ENCODE measurements at regions of chr4 and their contacts with region 1.

Region 1: DNA sequence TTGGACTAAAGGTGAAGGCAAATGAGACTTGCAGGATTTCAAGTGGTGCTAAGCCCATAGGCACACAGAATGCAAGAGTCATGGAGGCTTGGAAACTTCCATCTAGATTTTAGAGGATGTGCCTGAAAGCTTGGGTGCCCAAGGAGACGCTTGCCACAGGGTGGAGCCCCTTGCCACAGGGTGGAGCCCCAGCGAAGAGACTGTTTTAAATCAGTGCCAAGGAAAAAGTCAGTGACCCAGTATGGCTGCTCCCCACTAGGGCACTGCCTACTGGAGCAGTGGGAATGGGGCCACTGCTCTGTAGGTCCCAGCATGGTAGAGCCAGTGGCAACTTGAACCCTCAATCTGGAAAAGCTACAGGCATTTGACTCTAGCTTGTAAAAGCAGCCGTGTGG is 794.2 kb upstream of the LCORL start:
- DNase-seq: peak in 1 of 2 experiments; percentile 5
- H3K4me3 ChIP-seq: no peak overlapping the region
- H3K4me3 Mint-ChIP-seq: no peak overlapping the region
- H3K27ac Mint-ChIP-seq: no peak overlapping the region
- H3K4me1 ChIP-seq: 0 out of 2 replicates have a peak, but pooled peaks cover 7% of the 10 kb centered on the region
- H3K4me1 Mint-ChIP-seq: peaks cover 12% of the 10 kb centered on the region
- H3K27me3 ChIP-seq: no peaks in the 10 kb centered on the region
- H3K27me3 Mint-ChIP-seq: no peaks in the 10 kb centered on the region
- CTCF ChIP-seq: no peak

Region 2: GRCh38 chr4:18934197-18934596 is 118.4 kb after region 1 on chr4:
- CTCF ChIA-PET with region 1: no interaction called
- POLR2A ChIA-PET with region 1: no interaction called
- intact Hi-C with region 1: loop called (anchors 10 kb)
- DNase-seq: no peak
- H3K4me3 ChIP-seq: no peak overlapping the region
- H3K4me3 Mint-ChIP-seq: no peak overlapping the region
- H3K27ac Mint-ChIP-seq: no peak overlapping the region
- H3K4me1 ChIP-seq: no peaks in the 10 kb centered on the region
- H3K4me1 Mint-ChIP-seq: no peaks in the 10 kb centered on the region
- H3K27me3 ChIP-seq: no peaks in the 10 kb centered on the region
- H3K27me3 Mint-ChIP-seq: no peaks in the 10 kb centered on the region
- CTCF ChIP-seq: no peak

Measured in Caco-2 (cell line).